Colonic mucosa (tissue), 4 donors: ENCODE measurements at regions of chr7 and their contacts with region 1.

Region 1: DNA sequence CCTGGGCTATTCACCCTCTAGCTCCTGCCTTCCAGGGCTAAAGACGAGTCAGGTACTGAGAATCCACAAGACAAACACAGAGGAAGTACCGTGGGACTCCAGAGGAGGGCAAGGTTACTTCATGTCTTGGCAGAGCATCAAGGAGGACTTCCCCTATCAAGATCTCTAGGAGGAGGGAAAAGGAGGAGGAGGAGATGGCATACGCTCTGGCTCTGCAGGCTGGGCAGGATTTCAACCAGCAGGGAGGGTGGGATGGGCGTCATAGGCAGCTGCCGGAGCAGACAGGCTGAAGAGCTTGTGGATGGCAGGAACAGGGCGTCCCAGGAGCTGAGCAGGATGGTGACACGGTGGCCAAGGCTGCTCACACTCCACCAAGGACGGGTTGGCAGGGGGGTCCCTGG is 21.3 kb downstream of the MDH2 start:
- DNase-seq: peak; percentile 68
- H3K4me3 ChIP-seq: no peak overlapping the region
- H3K27ac ChIP-seq: no peak overlapping the region
- H3K4me1 ChIP-seq: no peaks in the 10 kb centered on the region
- H3K27me3 ChIP-seq: no peaks in the 10 kb centered on the region
- CTCF ChIP-seq: no peak

Region 2: GRCh38 chr7:76086070-76086469 is 16.8 kb after region 1 on chr7:
- intact Hi-C with region 1: no loop called
- DNase-seq: no peak
- H3K4me3 ChIP-seq: no peak overlapping the region
- H3K27ac ChIP-seq: no peak overlapping the region
- H3K4me1 ChIP-seq: no peaks in the 10 kb centered on the region
- H3K27me3 ChIP-seq: no peaks in the 10 kb centered on the region
- CTCF ChIP-seq: no peak

Region 3: GRCh38 chr7:76133164-76133775 is 64.0 kb after region 1 on chr7:
- intact Hi-C with region 1: loop called (anchors 5 kb)
- DNase-seq: no peak
- H3K4me3 ChIP-seq: no peak overlapping the region
- H3K27ac ChIP-seq: no peak overlapping the region
- H3K4me1 ChIP-seq: no peaks in the 10 kb centered on the region
- H3K27me3 ChIP-seq: no peaks in the 10 kb centered on the region
- CTCF ChIP-seq: no peak